ENCODE measurements at regions of chr2 and their contacts with region 1.

Region 1: GRCh38 chr2:27071277-27071989 is at the start of gene OST4:
- DNase-seq: peak; percentile 92
- ATAC-seq: peak; percentile 89
- H3K4me3 Mint-ChIP-seq: peak within 1 kb of the TSS; percentile 93
- H3K27ac Mint-ChIP-seq: peak within 1 kb of the TSS; percentile 92
- H3K4me1 Mint-ChIP-seq: peaks cover 52% of the 10 kb centered on the region
- H3K27me3 Mint-ChIP-seq: no peaks in the 10 kb centered on the region
- total RNA-seq, gene OST4: 302 to 325 TPM

Region 2: GRCh38 chr2:27086090-27086723 is 14.8 kb after region 1 on chr2:
- POLR2A ChIA-PET with region 1: interaction called, 113 read pairs
- DNase-seq: peak; percentile 100
- ATAC-seq: peak; percentile 89
- H3K4me3 Mint-ChIP-seq: peak overlapping the region; percentile 89
- H3K27ac Mint-ChIP-seq: peak overlapping the region; percentile 88
- H3K4me1 Mint-ChIP-seq: peaks cover 29% of the 10 kb centered on the region
- H3K27me3 Mint-ChIP-seq: no peaks in the 10 kb centered on the region

Region 3: DNA sequence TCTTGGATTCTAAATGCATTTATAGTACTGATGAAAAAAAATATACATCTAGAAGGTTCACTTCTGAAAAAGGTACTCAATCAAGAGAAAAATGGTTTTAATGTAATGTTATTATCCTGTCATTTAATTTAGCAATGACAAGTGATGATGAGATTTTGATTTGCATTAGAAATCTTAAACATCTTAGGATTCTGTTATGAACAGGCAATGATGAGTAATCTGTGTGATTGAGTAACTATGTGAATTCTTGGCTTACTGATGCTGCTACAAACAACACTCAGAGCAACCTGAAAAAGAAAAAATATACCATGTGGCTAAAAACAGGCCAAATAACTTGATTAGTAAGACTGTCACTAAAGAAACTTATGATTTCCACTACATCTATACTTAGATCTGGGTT is 788.7 kb after region 1 on chr2:
- POLR2A ChIA-PET with region 1: no interaction called
- DNase-seq: no peak
- ATAC-seq: no peak
- H3K4me3 Mint-ChIP-seq: no peak overlapping the region
- H3K27ac Mint-ChIP-seq: no peak overlapping the region
- H3K4me1 Mint-ChIP-seq: peaks cover 4% of the 10 kb centered on the region
- H3K27me3 Mint-ChIP-seq: no peaks in the 10 kb centered on the region